B cell (primary cell): ENCODE measurements at regions of chr19 and their contacts with region 1.

Region 1: GRCh38 chr19:9818734-9819589 is at the start of gene FBXL12:
- DNase-seq: peak; percentile 100
- ATAC-seq: peak; percentile 84
- H3K4me3 ChIP-seq: peak within 1 kb of the TSS; percentile 47 to 98 (median 96)
- H3K4me3 Mint-ChIP-seq: peak within 1 kb of the TSS; percentile 95
- H3K27ac ChIP-seq: peak within 1 kb of the TSS; percentile 92 to 98
- H3K27ac Mint-ChIP-seq: peak within 1 kb of the TSS; percentile 92
- H3K4me1 ChIP-seq: peaks cover 10 to 15% of the 10 kb centered on the region in 2 donors
- H3K4me1 Mint-ChIP-seq: peaks cover 29% of the 10 kb centered on the region
- H3K27me3 ChIP-seq: no peaks in the 10 kb centered on the region
- H3K27me3 Mint-ChIP-seq: no peaks in the 10 kb centered on the region
- CTCF ChIP-seq: no peak
- total RNA-seq, gene FBXL12: 41.5 and 41.6 TPM in 2 replicates

Region 2: GRCh38 chr19:9309139-9309973 is 509.6 kb before region 1 on chr19 and contains the start of gene ZNF699:
- CTCF ChIA-PET with region 1: no interaction called
- POLR2A ChIA-PET with region 1: no interaction called
- intact Hi-C with region 1: loop called (anchors 1 kb)
- DNase-seq: peak; percentile 99
- ATAC-seq: peak; percentile 87
- H3K4me3 ChIP-seq: peak within 1 kb of the TSS; percentile 77 to 100 (median 87)
- H3K4me3 Mint-ChIP-seq: peak within 1 kb of the TSS; percentile 87
- H3K27ac ChIP-seq: peak within 1 kb of the TSS; percentile 73 to 92
- H3K27ac Mint-ChIP-seq: peak within 1 kb of the TSS; percentile 92
- H3K4me1 ChIP-seq: peaks cover 9 to 12% of the 10 kb centered on the region in 2 donors
- H3K4me1 Mint-ChIP-seq: peaks cover 24% of the 10 kb centered on the region
- H3K27me3 ChIP-seq: no peaks in the 10 kb centered on the region
- H3K27me3 Mint-ChIP-seq: no peaks in the 10 kb centered on the region
- CTCF ChIP-seq: no peak
- total RNA-seq, gene ZNF699: 17.3 and 22.0 TPM in 2 replicates

Region 3: DNA sequence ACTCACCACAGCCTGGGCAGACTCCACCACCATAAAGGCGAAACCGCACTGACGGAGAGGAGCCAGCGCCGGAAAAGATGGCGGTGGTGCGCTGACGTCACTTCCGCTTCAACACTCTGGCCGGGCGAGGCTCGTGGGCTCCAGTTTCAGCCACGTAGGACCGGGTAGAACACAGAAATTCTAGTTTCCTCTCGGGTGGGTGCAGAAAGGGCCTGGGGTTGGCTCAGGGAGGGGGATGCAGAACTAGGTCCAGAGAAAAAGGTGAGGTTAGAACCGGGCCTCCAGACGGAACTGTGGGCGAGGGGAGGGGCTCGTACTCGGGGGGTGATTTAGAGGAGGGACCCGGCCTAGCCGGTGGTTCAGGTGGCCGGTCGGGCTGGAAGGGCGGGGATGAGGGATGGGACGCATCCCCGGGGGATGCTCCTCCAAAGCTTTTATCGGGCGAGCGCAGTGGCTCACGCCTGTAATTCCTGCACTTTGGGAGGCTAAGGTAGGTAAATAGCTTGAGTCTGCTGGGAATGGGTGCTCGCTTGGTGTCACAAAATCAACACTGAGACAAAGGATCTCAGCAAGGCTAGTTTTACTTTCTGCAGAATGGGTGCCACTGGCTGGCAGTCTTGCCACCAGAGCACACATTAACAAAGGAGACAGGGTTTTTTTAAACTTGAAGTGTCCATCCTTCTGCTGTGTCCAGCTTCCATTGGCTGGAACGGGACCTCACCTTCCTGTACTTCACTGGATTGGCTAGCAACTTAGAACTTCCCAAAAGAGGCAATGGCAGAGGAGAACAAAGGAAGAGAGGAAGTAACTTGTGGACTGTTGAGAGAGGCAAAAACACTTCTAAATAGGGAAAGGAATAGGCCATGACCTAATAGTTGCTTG is 197.6 kb before region 1 on chr19 and contains the start of gene ZNF561:
- CTCF ChIA-PET with region 1: no interaction called
- POLR2A ChIA-PET with region 1: no interaction called
- intact Hi-C with region 1: loop called (anchors 1 kb)
- DNase-seq: peak; percentile 95
- ATAC-seq: peak; percentile 86
- H3K4me3 ChIP-seq: peak within 1 kb of the TSS; percentile 56 to 91 (median 89)
- H3K4me3 Mint-ChIP-seq: peak within 1 kb of the TSS; percentile 100
- H3K27ac ChIP-seq: peak within 1 kb of the TSS; percentile 83 to 94
- H3K27ac Mint-ChIP-seq: peak within 1 kb of the TSS; percentile 100
- H3K4me1 ChIP-seq: peaks cover 12 to 21% of the 10 kb centered on the region in 2 donors
- H3K4me1 Mint-ChIP-seq: peaks cover 22% of the 10 kb centered on the region
- H3K27me3 ChIP-seq: no peaks in the 10 kb centered on the region
- H3K27me3 Mint-ChIP-seq: peaks cover 2% of the 10 kb centered on the region
- CTCF ChIP-seq: no peak
- total RNA-seq, gene ZNF561: 44.5 and 56.8 TPM in 2 replicates

Region 4: GRCh38 chr19:9709305-9709704 is 109.7 kb before region 1 on chr19:
- CTCF ChIA-PET with region 1: no interaction called
- POLR2A ChIA-PET with region 1: no interaction called
- intact Hi-C with region 1: no loop called
- DNase-seq: peak; percentile 18
- ATAC-seq: no peak
- H3K4me3 ChIP-seq: peak overlapping the region in 1 of 5 experiments; percentile 24
- H3K4me3 Mint-ChIP-seq: peak overlapping the region; percentile 7
- H3K27ac ChIP-seq: peak overlapping the region; percentile 50 to 64
- H3K27ac Mint-ChIP-seq: peak overlapping the region; percentile 75
- H3K4me1 ChIP-seq: peaks cover 8 to 11% of the 10 kb centered on the region in 2 donors
- H3K4me1 Mint-ChIP-seq: peaks cover 10% of the 10 kb centered on the region
- H3K27me3 ChIP-seq: peaks cover 0 to 3% (median 0%) of the 10 kb centered on the region in 4 experiments
- H3K27me3 Mint-ChIP-seq: peaks cover 4% of the 10 kb centered on the region
- CTCF ChIP-seq: no peak

Region 5: DNA sequence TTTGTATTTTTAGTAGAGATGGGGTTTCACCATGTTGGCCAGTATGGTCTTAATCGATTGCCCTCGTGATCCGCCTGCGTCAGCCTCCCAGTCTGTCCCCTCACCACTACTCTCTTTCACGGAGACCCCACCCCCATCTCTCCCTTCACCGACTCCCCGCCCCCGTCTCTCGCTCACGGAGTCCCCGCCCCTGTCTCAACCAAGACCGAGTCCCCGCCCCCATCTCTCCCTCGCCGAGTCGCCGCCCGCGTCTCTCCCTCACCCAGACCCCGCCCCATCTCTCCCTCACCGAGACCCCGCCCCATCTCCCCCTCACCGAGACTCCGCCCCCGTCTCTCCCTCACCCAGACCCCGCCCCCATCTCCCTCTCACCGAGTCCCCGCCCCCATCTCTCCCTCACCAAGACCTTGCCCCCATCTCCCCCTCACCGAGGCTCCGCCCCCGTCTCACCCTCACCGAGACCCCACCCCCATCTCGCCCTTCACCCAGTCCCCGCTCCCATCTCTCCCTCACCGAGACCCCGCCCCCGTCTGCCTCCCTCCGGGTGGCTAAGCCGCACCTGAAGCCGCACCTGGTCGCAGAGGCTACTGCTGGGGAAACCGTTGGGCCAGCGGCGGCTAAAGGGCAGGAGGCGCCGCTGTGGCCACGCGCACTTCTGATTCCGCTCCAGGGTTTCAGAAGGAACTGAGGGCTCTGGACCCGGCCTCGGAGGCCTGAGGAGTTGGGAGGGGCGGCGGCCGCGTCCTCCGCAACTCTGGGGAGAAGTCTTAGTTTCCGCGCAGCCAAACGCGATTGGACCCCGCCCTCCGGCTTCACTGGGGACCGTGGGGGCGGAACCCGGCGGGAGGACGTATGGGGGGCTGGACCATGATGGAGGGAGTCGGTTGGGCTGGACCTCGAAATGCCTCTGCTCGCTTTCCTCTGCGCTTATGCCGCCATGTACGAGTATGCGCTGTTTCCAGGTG is 33.3 kb before region 1 on chr19:
- CTCF ChIA-PET with region 1: no interaction called
- POLR2A ChIA-PET with region 1: interaction called, 8 read pairs
- intact Hi-C with region 1: loop called (anchors 1 kb)
- DNase-seq: peak; percentile 97
- ATAC-seq: peak; percentile 81
- H3K4me3 ChIP-seq: peak overlapping the region; percentile 45 to 94 (median 75)
- H3K4me3 Mint-ChIP-seq: peak overlapping the region; percentile 92
- H3K27ac ChIP-seq: peak overlapping the region; percentile 80 to 97
- H3K27ac Mint-ChIP-seq: peak overlapping the region; percentile 95
- H3K4me1 ChIP-seq: peaks cover 5 to 14% of the 10 kb centered on the region in 2 donors
- H3K4me1 Mint-ChIP-seq: peaks cover 22% of the 10 kb centered on the region
- H3K27me3 ChIP-seq: no peaks in the 10 kb centered on the region
- H3K27me3 Mint-ChIP-seq: no peaks in the 10 kb centered on the region
- CTCF ChIP-seq: no peak

Region 6: GRCh38 chr19:10835754-10836477 is 1017.0 kb after region 1 on chr19 and contains the start of gene TMED1:
- CTCF ChIA-PET with region 1: no interaction called
- POLR2A ChIA-PET with region 1: no interaction called
- intact Hi-C with region 1: loop called (anchors 5 kb)
- DNase-seq: peak; percentile 97
- ATAC-seq: peak; percentile 85
- H3K4me3 ChIP-seq: peak within 1 kb of the TSS; percentile 64 to 97 (median 94)
- H3K4me3 Mint-ChIP-seq: peak within 1 kb of the TSS; percentile 96
- H3K27ac ChIP-seq: peak within 1 kb of the TSS; percentile 95 to 97
- H3K27ac Mint-ChIP-seq: peak within 1 kb of the TSS; percentile 100
- H3K4me1 ChIP-seq: peaks cover 7 to 17% of the 10 kb centered on the region in 2 donors
- H3K4me1 Mint-ChIP-seq: peaks cover 14% of the 10 kb centered on the region
- H3K27me3 ChIP-seq: no peaks in the 10 kb centered on the region
- H3K27me3 Mint-ChIP-seq: no peaks in the 10 kb centered on the region
- CTCF ChIP-seq: no peak
- total RNA-seq, gene TMED1: 13.1 and 14.7 TPM in 2 replicates